ENCODE measurements at regions of chr5 and their contacts with region 1.

Region 1: DNA sequence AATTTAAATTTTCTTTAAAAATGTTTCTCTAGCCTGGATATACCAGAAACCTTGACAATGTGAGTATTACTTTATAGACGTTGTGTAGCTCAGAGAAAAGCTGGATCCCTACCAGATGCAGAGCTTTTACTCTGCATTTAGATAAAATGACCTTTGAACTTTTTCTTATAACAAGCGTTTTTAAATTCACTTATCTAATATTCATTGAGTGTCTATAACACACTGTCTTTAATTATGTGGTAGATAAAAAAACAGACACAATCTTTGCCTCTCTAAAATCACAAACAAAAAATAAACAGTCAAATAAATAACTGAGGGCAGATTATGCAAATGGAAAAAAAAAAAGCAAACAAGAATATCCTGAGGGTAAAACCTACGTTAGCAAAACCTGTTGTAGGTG is 773.6 kb downstream of the CDH12 start:
- DNase-seq: no peak
- ATAC-seq: no peak
- H3K4me3 ChIP-seq: no peak overlapping the region
- H3K27ac ChIP-seq: no peak overlapping the region
- H3K4me1 ChIP-seq: no peaks in the 10 kb centered on the region
- H3K27me3 ChIP-seq: no peaks in the 10 kb centered on the region
- CTCF ChIP-seq: no peak
- POLR2A ChIP-seq: no peak
- RAD21 ChIP-seq: no peak

Region 2: DNA sequence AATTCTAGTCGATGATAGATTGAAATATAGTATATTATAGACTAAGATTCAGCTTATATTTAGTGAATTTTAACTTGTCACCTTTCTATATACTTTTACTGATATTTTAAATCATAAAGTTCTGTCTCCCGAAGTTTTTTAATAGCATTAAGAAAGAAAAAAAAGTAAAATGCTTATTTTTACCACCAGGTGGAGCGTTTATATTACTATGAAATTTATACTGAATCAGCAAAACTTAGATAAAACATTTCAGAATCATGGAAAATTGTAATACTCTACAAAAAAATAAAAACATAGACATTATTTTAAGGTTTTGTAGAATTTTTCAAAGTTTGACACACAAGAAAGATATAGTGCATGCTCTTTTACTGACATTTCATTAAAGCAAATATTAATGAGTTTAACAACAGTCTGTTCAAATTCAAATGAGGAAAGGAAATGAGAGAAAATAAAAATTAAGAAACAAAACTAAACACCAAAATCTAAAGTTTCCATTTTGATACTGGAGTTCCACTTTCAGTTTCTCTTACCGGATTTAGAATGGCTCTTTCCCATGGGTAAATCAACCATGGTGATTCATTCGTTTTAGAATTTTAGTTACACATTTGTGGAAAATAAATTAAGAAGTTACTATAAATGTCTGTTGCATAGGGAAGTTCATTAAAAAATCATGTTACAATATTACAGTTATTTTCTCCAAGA is 261.7 kb before region 1 on chr5:
- CTCF ChIA-PET with region 1: no interaction called
- POLR2A ChIA-PET with region 1: no interaction called
- RAD21 ChIA-PET with region 1: no interaction called
- intact Hi-C with region 1: no loop called
- DNase-seq: no peak
- ATAC-seq: no peak
- H3K4me3 ChIP-seq: no peak overlapping the region
- H3K27ac ChIP-seq: no peak overlapping the region
- H3K4me1 ChIP-seq: no peaks in the 10 kb centered on the region
- H3K27me3 ChIP-seq: no peaks in the 10 kb centered on the region
- CTCF ChIP-seq: peak in 1 of 3 experiments; percentile 30; a peak in 1 of 6 replicates
- POLR2A ChIP-seq: no peak
- RAD21 ChIP-seq: peak; percentile 10; the same call in 1 of the 2 replicates

Region 3: DNA sequence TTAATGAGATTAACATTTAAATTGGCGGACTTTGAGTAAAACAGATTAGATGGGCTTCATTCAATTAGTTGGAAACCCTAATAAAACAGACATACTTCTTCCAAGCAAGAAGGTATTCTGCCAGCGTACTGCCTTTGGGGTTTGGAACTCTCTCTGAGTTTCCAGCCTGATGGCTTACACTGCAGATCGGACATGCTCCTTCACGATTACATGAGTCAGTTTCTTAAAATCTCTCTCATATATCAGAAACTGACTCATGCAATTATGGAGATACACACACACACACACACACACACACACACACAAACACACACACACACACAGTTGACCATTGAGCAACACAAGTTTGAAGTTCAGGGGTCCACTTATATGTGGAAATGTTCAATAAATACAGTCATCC is 15.8 kb before region 1 on chr5:
- CTCF ChIA-PET with region 1: no interaction called
- POLR2A ChIA-PET with region 1: no interaction called
- RAD21 ChIA-PET with region 1: no interaction called
- intact Hi-C with region 1: loop called (anchors 2 kb)
- DNase-seq: no peak
- ATAC-seq: no peak
- H3K4me3 ChIP-seq: no peak overlapping the region
- H3K27ac ChIP-seq: no peak overlapping the region
- H3K4me1 ChIP-seq: no peaks in the 10 kb centered on the region
- H3K27me3 ChIP-seq: no peaks in the 10 kb centered on the region
- CTCF ChIP-seq: no peak
- POLR2A ChIP-seq: no peak
- RAD21 ChIP-seq: no peak